Ovary (tissue), 10 donors: ENCODE measurements at regions of chr5 and their contacts with region 1.

Region 1: DNA sequence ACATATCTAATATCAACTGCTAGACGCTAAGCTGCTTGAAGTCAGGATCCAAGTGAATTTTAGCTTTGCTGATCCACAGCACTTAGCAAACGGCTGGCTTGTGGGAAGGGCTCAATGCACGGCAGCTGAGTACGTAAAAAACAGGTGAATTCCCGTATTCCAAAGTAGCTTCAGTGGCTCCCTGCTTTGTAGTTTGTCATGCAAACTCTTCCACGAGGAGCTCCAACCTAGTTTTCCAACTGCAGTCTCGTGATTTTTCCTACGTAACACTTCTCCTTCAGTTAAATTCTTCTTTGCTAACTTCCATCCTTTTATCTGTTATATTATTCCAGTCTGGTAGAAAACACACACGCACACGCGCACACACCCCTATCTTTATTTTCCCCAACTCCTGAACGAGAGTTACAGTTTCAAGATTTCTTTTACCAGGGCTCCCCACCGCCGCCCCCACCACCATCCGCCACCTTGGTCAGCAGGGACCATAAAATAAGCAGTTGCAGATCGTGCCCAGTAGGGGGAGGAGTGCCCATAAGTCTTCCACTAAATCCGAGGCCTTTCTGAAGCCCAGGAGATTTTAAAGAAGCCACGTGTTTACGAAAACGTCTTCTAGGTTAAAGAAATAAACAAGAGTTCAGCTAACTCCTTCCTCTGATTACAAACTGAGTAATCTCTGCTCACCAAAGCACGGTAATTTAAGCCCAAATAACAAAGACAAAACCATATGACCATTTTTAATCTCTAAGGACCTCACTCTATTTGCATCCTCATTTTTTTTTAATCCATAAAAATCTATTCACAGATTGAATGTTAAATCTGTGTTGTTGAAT is 34.8 kb upstream of the TRIO start:
- DNase-seq: peak; percentile 50 to 75 (median 63)
- H3K4me3 ChIP-seq: peak overlapping the region; percentile 16
- H3K27ac ChIP-seq: no peak overlapping the region
- H3K4me1 ChIP-seq: no peaks in the 10 kb centered on the region
- H3K27me3 ChIP-seq: no peaks in the 10 kb centered on the region
- CTCF ChIP-seq: peak; percentile 44 to 59 (median 54)
- EP300 ChIP-seq: no peak
- POLR2A ChIP-seq: no peak

Region 2: DNA sequence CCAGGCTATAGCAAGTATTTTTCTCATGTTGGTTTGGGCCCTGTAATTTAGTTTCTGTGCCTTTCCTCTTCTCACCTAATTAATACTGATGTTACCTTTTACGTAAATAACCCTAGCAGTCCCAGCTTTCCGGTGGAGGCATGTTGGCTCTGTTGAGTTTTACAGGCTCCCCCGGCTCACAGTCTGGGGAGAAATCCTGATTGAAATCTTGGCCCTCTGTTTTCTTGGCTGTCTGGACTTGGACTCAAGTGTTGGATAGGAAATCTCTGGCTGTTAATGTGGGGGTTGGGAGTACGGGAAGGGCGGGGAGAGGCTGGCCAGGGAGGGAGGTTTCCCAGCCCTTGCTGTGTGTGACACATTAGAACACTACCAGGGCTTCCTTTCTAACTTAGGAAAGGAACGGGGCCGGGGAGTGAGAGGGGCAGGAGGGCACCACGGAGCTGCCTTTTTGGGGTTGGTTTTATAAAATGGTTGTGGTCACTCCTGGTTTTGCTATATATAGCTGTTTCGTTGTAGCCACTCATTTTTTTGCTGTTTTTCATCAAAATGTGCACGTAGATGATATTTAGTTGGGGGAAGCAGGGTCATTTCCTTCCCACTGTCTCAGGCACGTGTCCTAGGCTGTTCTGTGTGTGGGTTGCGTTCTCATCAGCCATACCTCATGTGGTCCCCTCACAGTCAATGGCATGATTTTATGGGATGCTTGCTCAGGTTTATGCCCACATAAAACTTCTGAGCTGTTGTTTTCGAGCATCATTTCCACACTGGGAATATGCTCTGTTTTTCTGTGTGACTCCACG is 45.7 kb after region 1 on chr5:
- intact Hi-C with region 1: no loop called
- DNase-seq: peak in 2 of 5 donors; percentile 49 to 61
- H3K4me3 ChIP-seq: no peak overlapping the region
- H3K27ac ChIP-seq: no peak overlapping the region
- H3K4me1 ChIP-seq: peaks cover 21% of the 10 kb centered on the region
- H3K27me3 ChIP-seq: no peaks in the 10 kb centered on the region
- CTCF ChIP-seq: no peak
- EP300 ChIP-seq: no peak
- POLR2A ChIP-seq: no peak

Region 3: DNA sequence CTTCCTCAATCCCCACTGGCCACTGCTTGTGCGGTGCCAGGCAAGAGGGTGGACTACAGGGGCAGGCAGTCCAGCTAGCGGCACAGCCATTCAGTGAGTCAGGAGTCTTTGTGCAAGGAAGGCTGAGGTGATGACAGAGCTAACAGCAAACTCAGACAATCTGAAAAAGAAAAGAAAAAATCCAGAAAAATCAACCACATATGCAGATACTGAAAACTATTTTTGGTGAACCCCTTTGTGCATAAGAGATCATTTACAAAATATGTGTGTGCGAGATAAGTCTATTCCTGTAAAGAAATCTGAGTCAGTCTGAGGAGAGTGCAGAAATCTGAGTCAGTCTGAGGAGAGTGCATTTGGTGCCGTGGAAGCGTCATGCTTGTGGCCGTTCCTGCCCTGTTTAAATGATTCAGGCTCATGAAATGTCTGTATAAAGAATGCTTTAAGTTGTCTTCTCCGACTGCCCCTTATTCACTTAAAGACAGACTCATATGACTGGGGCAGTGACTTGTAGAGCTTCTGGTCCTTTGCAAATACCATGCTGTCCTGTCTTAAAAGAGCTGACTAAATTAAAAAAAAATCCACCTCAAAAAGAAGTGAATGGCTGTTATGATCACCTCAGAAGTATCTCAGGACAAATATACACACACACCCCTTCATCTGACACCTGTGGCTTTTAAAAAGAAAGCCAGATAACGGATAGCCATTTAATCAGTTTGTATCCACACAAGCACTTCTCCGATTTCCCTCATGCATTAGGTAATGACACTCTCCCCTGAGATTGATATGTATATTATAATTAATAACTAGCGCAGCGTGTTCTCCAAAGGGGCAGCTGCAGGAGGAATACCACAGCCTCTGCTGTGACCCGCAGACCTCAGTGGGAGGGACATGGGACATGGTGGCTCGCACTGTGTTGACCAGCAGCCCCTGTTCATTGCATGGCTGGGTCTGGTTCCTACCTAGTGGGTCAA is 82.1 kb after region 1 on chr5:
- intact Hi-C with region 1: no loop called
- DNase-seq: no peak
- H3K4me3 ChIP-seq: no peak overlapping the region
- H3K27ac ChIP-seq: peak overlapping the region in 1 of 2 donors; percentile 22
- H3K4me1 ChIP-seq: peaks cover 17% of the 10 kb centered on the region
- H3K27me3 ChIP-seq: no peaks in the 10 kb centered on the region
- CTCF ChIP-seq: no peak
- EP300 ChIP-seq: no peak
- POLR2A ChIP-seq: no peak

Region 4: GRCh38 chr5:14264604-14265316 is 156.4 kb after region 1 on chr5:
- intact Hi-C with region 1: loop called in 2 of 4 experiments (anchors 2 to 5 kb)
- DNase-seq: peak; percentile 89 to 94 (median 94)
- H3K4me3 ChIP-seq: peak overlapping the region; percentile 1
- H3K27ac ChIP-seq: peak overlapping the region in 1 of 2 donors; percentile 38
- H3K4me1 ChIP-seq: peaks cover 21% of the 10 kb centered on the region
- H3K27me3 ChIP-seq: no peaks in the 10 kb centered on the region
- CTCF ChIP-seq: no peak
- EP300 ChIP-seq: no peak
- POLR2A ChIP-seq: peak; percentile 50

Region 5: DNA sequence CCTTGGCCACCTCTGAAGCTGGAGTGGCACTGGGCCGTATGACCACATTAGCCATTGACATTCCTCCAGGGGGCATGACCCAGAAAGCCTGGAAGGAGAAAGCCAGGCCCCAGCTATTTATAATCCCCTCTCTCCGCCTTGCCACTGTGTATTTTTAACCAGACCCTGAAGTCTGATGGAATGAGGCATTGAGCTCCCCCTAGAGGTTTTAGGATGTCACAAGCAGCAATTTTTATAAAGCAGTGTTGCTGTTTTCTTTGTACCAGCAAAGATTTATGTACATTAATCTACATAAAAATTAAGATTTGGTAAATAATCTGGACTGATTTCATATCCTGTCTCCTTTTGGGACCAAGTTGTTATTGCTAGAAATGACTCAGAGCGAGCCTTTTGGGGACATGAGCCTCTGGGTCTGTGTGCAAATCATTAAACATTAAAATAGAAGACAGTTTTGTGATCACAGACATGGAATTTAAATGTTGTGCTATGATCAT is 161.9 kb after region 1 on chr5:
- intact Hi-C with region 1: loop called in 3 of 4 experiments (anchors 2 to 10 kb)
- DNase-seq: peak; percentile 38 to 60 (median 53)
- H3K4me3 ChIP-seq: no peak overlapping the region
- H3K27ac ChIP-seq: peak overlapping the region; percentile 26 to 29
- H3K4me1 ChIP-seq: peaks cover 22% of the 10 kb centered on the region
- H3K27me3 ChIP-seq: no peaks in the 10 kb centered on the region
- CTCF ChIP-seq: peak; percentile 71 to 79 (median 77)
- EP300 ChIP-seq: no peak
- POLR2A ChIP-seq: no peak

Region 6: DNA sequence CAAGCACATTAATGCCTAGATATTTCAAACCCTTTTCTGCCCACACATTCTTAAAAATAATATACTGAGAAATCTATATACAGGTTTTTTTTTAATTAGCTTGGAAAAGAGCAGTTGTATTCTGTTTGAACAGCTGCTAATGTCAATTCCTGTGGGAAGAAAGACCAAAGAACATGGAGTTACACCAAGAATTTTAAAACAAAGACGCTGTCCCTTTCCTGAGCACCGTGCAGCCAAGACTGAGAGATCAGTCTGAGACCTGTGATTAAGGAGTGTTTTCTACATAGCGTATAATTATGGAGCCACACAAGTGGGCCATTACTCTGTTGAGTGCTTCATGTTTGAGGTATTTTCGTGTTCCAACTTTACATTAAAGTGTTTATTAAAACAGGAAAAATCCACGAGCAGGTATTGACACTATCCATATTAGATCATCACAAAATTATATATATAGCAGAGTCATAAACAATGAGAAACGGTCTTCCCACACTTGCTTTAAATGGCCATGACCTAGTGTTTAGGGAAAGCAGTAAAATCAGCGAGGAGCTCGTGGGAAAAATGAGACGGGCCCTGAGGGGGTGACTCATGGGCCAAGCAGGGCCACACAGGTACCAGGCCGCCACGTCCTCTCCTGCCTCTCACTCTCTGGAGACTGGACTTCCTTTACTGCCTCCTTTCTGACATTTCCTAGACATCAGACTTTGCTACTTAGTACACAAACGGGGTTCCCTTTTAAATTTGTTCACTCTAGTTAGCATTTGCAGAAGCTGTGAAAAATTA is 320.1 kb after region 1 on chr5:
- intact Hi-C with region 1: no loop called
- DNase-seq: no peak
- H3K4me3 ChIP-seq: no peak overlapping the region
- H3K27ac ChIP-seq: no peak overlapping the region
- H3K4me1 ChIP-seq: peaks cover 17% of the 10 kb centered on the region
- H3K27me3 ChIP-seq: no peaks in the 10 kb centered on the region
- CTCF ChIP-seq: no peak
- EP300 ChIP-seq: no peak
- POLR2A ChIP-seq: no peak